Activated B cell treated with CpG ODN at 0.5 μM for 24 hours (primary cell): ENCODE measurements at regions of chr3 and their contacts with region 1.

Region 1: GRCh38 chr3:105862217-105862616 is 6.6 kb downstream of the CBLB start:
- DNase-seq: no peak
- ATAC-seq: peak; percentile 94
- H3K4me3 Mint-ChIP-seq: no peak overlapping the region
- H3K27ac Mint-ChIP-seq: no peak overlapping the region
- H3K4me1 Mint-ChIP-seq: peaks cover 50% of the 10 kb centered on the region
- H3K27me3 Mint-ChIP-seq: no peaks in the 10 kb centered on the region
- CTCF ChIP-seq: no peak

Region 2: GRCh38 chr3:105214575-105214974 is 647.6 kb before region 1 on chr3:
- CTCF ChIA-PET with region 1: no interaction called
- POLR2A ChIA-PET with region 1: no interaction called
- intact Hi-C with region 1: no loop called
- DNase-seq: no peak
- ATAC-seq: no peak
- H3K4me3 Mint-ChIP-seq: no peak overlapping the region
- H3K27ac Mint-ChIP-seq: no peak overlapping the region
- H3K4me1 Mint-ChIP-seq: no peaks in the 10 kb centered on the region
- H3K27me3 Mint-ChIP-seq: peaks cover 5% of the 10 kb centered on the region
- CTCF ChIP-seq: no peak

Region 3: GRCh38 chr3:105836533-105836932 is 25.7 kb before region 1 on chr3:
- CTCF ChIA-PET with region 1: no interaction called
- POLR2A ChIA-PET with region 1: interaction called, 26 read pairs
- intact Hi-C with region 1: loop called (anchors 2 kb)
- DNase-seq: no peak
- ATAC-seq: no peak
- H3K4me3 Mint-ChIP-seq: peak overlapping the region; percentile 72
- H3K27ac Mint-ChIP-seq: peak overlapping the region; percentile 82
- H3K4me1 Mint-ChIP-seq: peaks cover 63% of the 10 kb centered on the region
- H3K27me3 Mint-ChIP-seq: no peaks in the 10 kb centered on the region
- CTCF ChIP-seq: no peak

Region 4: GRCh38 chr3:106049821-106050220 is 187.6 kb after region 1 on chr3:
- CTCF ChIA-PET with region 1: no interaction called
- POLR2A ChIA-PET with region 1: no interaction called
- intact Hi-C with region 1: no loop called
- DNase-seq: no peak
- ATAC-seq: no peak
- H3K4me3 Mint-ChIP-seq: no peak overlapping the region
- H3K27ac Mint-ChIP-seq: no peak overlapping the region
- H3K4me1 Mint-ChIP-seq: no peaks in the 10 kb centered on the region
- H3K27me3 Mint-ChIP-seq: no peaks in the 10 kb centered on the region
- CTCF ChIP-seq: no peak